Sigmoid colon (tissue), 7 donors: ENCODE measurements at regions of chr2 and their contacts with region 1.

Region 1: DNA sequence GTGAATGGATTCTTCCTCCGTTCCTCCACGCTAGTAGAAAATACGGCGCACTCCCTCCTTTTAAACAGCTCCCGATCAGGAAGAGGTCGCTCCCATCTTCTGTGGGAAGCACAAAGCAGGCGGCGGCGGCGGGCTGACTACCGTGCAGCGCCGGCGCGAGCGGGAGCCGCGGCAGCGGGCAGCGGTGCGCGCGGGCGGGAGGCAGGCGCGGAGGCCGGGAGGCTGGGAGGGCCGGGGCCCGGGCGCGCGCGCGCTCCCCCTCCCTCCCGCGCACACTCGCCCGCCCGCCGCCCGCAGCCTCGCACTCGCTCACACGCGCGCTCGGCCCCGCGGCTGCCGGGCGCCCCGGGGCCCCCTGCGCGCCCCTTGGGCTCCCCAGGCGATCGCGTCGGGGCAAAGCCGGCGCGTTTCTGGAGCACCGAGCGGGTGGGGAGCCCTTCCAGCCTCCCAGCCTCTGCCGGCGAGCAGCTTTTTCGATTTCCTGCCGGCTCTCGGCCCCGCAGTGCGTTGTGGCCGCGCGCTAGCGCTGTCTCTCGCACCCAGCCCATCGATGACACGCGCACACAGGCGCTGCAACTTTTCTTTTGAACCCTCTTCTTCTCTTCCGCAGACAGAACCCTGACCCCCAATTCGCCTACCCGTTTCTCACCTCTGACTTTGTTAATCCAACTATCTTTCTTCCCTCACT is at the start of gene SLC8A1:
- DNase-seq: peak; percentile 68
- H3K4me3 ChIP-seq: peak within 1 kb of the TSS; percentile 57 to 67 (median 65)
- H3K27ac ChIP-seq: peak within 1 kb of the TSS; percentile 86 to 96 (median 92)
- H3K4me1 ChIP-seq: peaks cover 0 to 53% (median 24%) of the 10 kb centered on the region in 4 donors
- H3K27me3 ChIP-seq: no peaks in the 10 kb centered on the region
- CTCF ChIP-seq: no peak
- EP300 ChIP-seq: no peak
- POLR2A ChIP-seq: peak in 1 of 2 donors; percentile 16
- total RNA-seq, gene SLC8A1: 229 to 337 (median 302) TPM

Region 2: GRCh38 chr2:39913648-39914461 is 538.2 kb before region 1 on chr2:
- intact Hi-C with region 1: loop called (anchors 10 kb)
- DNase-seq: no peak
- H3K4me3 ChIP-seq: no peak overlapping the region
- H3K27ac ChIP-seq: peak overlapping the region in 2 of 4 donors; percentile 22 to 27
- H3K4me1 ChIP-seq: peaks cover 0 to 8% (median 5%) of the 10 kb centered on the region in 4 donors
- H3K27me3 ChIP-seq: no peaks in the 10 kb centered on the region
- CTCF ChIP-seq: peak; percentile 54 to 71 (median 67)
- EP300 ChIP-seq: no peak
- POLR2A ChIP-seq: no peak

Region 3: DNA sequence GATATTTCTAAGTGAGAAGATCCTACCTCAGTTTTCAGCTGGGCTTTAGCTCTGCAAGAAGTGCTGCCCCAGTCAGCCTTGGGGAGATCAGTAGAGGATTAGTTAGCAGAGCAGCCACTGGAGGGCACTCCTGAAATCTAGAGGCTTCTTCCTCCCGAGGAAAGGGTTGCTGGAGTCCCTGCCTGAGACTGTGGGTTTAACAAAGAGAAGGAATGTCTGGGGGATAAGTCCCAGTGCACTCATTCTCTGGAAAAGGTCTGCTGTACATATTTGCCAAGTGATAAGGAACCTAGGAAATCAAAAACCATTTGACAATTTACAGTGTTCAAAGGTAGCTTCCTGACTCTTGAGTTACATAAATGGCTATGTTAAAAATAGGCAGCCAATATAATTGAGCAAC is 207.4 kb before region 1 on chr2:
- intact Hi-C with region 1: loop called (anchors 2 kb)
- DNase-seq: peak; percentile 77
- H3K4me3 ChIP-seq: no peak overlapping the region
- H3K27ac ChIP-seq: peak overlapping the region; percentile 1 to 75 (median 67)
- H3K4me1 ChIP-seq: peaks cover 0 to 63% (median 50%) of the 10 kb centered on the region in 4 donors
- H3K27me3 ChIP-seq: no peaks in the 10 kb centered on the region
- CTCF ChIP-seq: peak in 3 of 4 experiments; percentile 23 to 48 (median 40)
- EP300 ChIP-seq: no peak
- POLR2A ChIP-seq: no peak

Region 4: GRCh38 chr2:40325116-40325515 is 126.9 kb before region 1 on chr2:
- intact Hi-C with region 1: loop called (anchors 5 kb)
- DNase-seq: no peak
- H3K4me3 ChIP-seq: no peak overlapping the region
- H3K27ac ChIP-seq: peak overlapping the region in 3 of 4 donors; percentile 7 to 36 (median 25)
- H3K4me1 ChIP-seq: peaks cover 0 to 37% (median 28%) of the 10 kb centered on the region in 4 donors
- H3K27me3 ChIP-seq: no peaks in the 10 kb centered on the region
- CTCF ChIP-seq: no peak
- EP300 ChIP-seq: no peak
- POLR2A ChIP-seq: no peak

Region 5: DNA sequence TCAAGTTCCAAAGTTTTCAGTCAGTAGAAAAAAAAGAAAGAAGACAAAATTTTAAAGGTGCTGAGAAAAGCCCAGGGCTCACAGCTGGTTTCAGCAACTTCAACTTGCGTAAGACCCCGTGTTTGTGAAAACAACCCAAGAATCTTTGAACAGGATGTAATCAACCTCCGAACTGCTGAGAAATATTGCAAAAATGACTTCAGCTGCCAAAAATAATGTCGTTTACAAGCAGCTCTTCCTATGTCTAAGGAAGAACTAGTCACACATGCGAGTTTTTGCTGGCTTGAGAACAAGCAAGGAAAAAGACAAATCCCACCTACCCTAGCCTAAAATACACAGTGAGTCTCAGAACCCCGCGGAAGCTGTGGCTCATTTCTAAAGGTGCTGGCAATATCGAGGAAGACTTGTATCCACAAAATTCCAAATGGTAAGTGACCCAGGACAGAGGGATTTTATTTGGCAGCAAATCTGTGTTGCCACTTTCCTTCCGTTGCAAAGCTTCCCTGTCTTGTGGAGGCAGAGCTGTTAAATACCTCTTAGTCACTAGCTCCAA is 59.7 kb after region 1 on chr2:
- intact Hi-C with region 1: loop called (anchors 5 kb)
- DNase-seq: peak; percentile 80
- H3K4me3 ChIP-seq: peak overlapping the region; percentile 36 to 54 (median 47)
- H3K27ac ChIP-seq: peak overlapping the region; percentile 75 to 87 (median 80)
- H3K4me1 ChIP-seq: peaks cover 0 to 59% (median 12%) of the 10 kb centered on the region in 4 donors
- H3K27me3 ChIP-seq: no peaks in the 10 kb centered on the region
- CTCF ChIP-seq: no peak
- EP300 ChIP-seq: peak in 1 of 4 donors; percentile 19
- POLR2A ChIP-seq: no peak